ENCODE measurements at regions of chr17 and their contacts with region 1.

Region 1: GRCh38 chr17:6473128-6473767 is 29.0 kb downstream of the PIMREG start:
- DNase-seq: peak; percentile 72
- H3K4me3 ChIP-seq: no peak overlapping the region
- H3K27ac ChIP-seq: no peak overlapping the region
- H3K4me1 ChIP-seq: peaks cover 15% of the 10 kb centered on the region
- H3K27me3 ChIP-seq: no peaks in the 10 kb centered on the region
- CTCF ChIP-seq: peak; percentile 95 to 97
- POLR2A ChIP-seq: no peak

Region 2: GRCh38 chr17:6374761-6375312 is 98.4 kb before region 1 on chr17:
- CTCF ChIA-PET with region 1: no interaction called
- POLR2A ChIA-PET with region 1: no interaction called
- dilution Hi-C with region 1: no loop called
- intact Hi-C with region 1: no loop called
- DNase-seq: peak; percentile 11
- H3K4me3 ChIP-seq: no peak overlapping the region
- H3K27ac ChIP-seq: no peak overlapping the region
- H3K4me1 ChIP-seq: no peaks in the 10 kb centered on the region
- H3K27me3 ChIP-seq: peaks cover 0 to 8% of the 10 kb centered on the region in 2 experiments
- CTCF ChIP-seq: no peak
- POLR2A ChIP-seq: no peak

Region 3: GRCh38 chr17:6507535-6507934 is 34.3 kb after region 1 on chr17:
- CTCF ChIA-PET with region 1: interaction called, 14 read pairs
- POLR2A ChIA-PET with region 1: interaction called, 3 read pairs
- dilution Hi-C with region 1: no loop called
- intact Hi-C with region 1: loop called (anchors 5 kb)
- DNase-seq: peak; percentile 92
- H3K4me3 ChIP-seq: no peak overlapping the region
- H3K27ac ChIP-seq: no peak overlapping the region
- H3K4me1 ChIP-seq: peaks cover 53% of the 10 kb centered on the region
- H3K27me3 ChIP-seq: no peaks in the 10 kb centered on the region
- CTCF ChIP-seq: no peak
- POLR2A ChIP-seq: no peak

Region 4: GRCh38 chr17:6567529-6568183 is 94.4 kb after region 1 on chr17:
- CTCF ChIA-PET with region 1: interaction called, 77 read pairs
- POLR2A ChIA-PET with region 1: no interaction called
- dilution Hi-C with region 1: no loop called
- intact Hi-C with region 1: no loop called
- DNase-seq: no peak
- H3K4me3 ChIP-seq: no peak overlapping the region
- H3K27ac ChIP-seq: no peak overlapping the region
- H3K4me1 ChIP-seq: no peaks in the 10 kb centered on the region
- H3K27me3 ChIP-seq: no peaks in the 10 kb centered on the region
- CTCF ChIP-seq: no peak
- POLR2A ChIP-seq: no peak

Region 5: DNA sequence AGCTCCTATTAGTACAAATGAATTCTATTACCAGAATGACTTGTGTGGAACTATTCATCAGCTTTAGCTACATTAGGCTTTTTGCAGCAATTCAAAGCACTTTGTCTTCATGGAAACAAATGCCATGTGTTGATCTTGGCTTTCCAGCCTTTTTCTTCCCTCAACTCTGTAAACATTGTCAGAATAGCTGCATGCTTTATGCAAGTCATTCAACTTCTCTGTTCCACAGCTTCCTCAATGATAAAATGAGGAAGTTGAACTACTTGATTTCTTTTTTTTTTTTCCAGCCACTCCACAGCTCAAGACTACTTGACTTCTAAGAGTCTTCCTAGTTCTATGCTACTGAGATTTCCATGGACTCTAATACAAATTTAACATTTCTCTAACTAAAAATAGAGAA is 126.1 kb after region 1 on chr17:
- CTCF ChIA-PET with region 1: interaction called, 39 read pairs
- POLR2A ChIA-PET with region 1: no interaction called
- dilution Hi-C with region 1: no loop called
- intact Hi-C with region 1: no loop called
- DNase-seq: peak; percentile 86
- H3K4me3 ChIP-seq: no peak overlapping the region
- H3K27ac ChIP-seq: no peak overlapping the region
- H3K4me1 ChIP-seq: no peaks in the 10 kb centered on the region
- H3K27me3 ChIP-seq: no peaks in the 10 kb centered on the region
- CTCF ChIP-seq: no peak
- POLR2A ChIP-seq: no peak

Region 6: DNA sequence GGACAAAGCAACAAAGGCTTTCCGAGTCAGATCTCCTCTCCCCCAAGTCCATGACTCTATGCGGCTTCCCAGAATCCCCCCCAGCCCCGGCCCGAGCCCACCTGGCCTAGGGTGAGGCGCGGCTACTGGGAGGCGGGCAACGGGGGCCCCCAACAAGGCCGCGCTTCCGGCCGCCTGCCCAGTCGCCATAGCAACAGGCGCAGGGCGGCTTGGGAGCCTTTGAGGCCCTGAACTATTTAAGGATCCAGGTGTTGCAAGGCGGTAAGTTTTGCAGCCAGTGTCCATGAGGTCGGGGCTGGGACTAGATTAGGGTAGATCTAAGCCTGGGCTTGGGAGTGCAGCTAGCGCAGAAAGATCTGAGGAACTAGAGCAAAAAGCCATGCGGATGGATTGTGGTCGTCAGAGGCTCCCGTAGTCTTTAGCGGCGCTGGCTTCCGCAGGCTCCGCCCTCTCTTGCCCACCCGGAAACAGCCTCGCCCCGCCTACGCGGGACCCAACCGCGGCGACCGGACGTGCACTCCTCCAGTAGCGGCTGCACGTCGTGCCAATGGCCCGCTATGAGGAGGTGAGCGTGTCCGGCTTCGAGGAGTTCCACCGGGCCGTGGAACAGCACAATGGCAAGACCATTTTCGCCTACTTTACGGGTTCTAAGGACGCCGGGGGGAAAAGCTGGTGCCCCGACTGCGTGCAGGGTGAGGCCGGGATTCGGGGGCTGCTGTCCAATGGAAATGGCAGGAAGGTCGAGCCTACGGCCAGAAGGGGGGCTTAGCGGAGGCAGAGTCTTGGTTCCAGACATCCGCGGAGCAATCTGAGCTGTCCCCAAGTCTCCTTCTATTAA is 167.5 kb after region 1 on chr17 and contains the starts of genes KIAA0753 and TXNDC17:
- CTCF ChIA-PET with region 1: interaction called, 38 read pairs
- POLR2A ChIA-PET with region 1: no interaction called
- dilution Hi-C with region 1: no loop called
- intact Hi-C with region 1: loop called (anchors 1 kb)
- DNase-seq: peak; percentile 96
- H3K4me3 ChIP-seq: peak within 1 kb of the TSS; percentile 44 to 86 (median 70)
- H3K27ac ChIP-seq: peak within 1 kb of the TSS; percentile 83
- H3K4me1 ChIP-seq: peaks cover 15% of the 10 kb centered on the region
- H3K27me3 ChIP-seq: no peaks in the 10 kb centered on the region
- CTCF ChIP-seq: no peak
- POLR2A ChIP-seq: peak; percentile 98
- total RNA-seq, gene KIAA0753: 20.1 and 23.9 TPM in 2 replicates
- total RNA-seq, gene TXNDC17: 101 and 103 TPM in 2 replicates

Measured in endothelial cell of umbilical vein (primary cell).